CD8-positive, alpha-beta T cell (primary cell): ENCODE measurements at regions of chr12 and their contacts with region 1.

Region 1: GRCh38 chr12:22283006-22283506 is 51.5 kb downstream of the ST8SIA1 start:
- DNase-seq: no peak
- ATAC-seq: no peak
- H3K4me3 ChIP-seq: no peak overlapping the region
- H3K4me3 Mint-ChIP-seq: no peak overlapping the region
- H3K27ac ChIP-seq: no peak overlapping the region
- H3K27ac Mint-ChIP-seq: no peak overlapping the region
- H3K4me1 ChIP-seq: peaks cover 3% of the 10 kb centered on the region
- H3K4me1 Mint-ChIP-seq: peaks cover 6% of the 10 kb centered on the region
- H3K27me3 ChIP-seq: no peaks in the 10 kb centered on the region
- H3K27me3 Mint-ChIP-seq: peaks cover 5% of the 10 kb centered on the region
- CTCF ChIP-seq: no peak

Region 2: GRCh38 chr12:20314328-20314727 is 1968.7 kb before region 1 on chr12:
- CTCF ChIA-PET with region 1: no interaction called
- POLR2A ChIA-PET with region 1: no interaction called
- intact Hi-C with region 1: no loop called
- DNase-seq: no peak
- ATAC-seq: no peak
- H3K4me3 ChIP-seq: no peak overlapping the region
- H3K4me3 Mint-ChIP-seq: no peak overlapping the region
- H3K27ac ChIP-seq: no peak overlapping the region
- H3K27ac Mint-ChIP-seq: no peak overlapping the region
- H3K4me1 ChIP-seq: no peaks in the 10 kb centered on the region
- H3K4me1 Mint-ChIP-seq: no peaks in the 10 kb centered on the region
- H3K27me3 ChIP-seq: no peaks in the 10 kb centered on the region
- H3K27me3 Mint-ChIP-seq: no peaks in the 10 kb centered on the region
- CTCF ChIP-seq: no peak

Region 3: DNA sequence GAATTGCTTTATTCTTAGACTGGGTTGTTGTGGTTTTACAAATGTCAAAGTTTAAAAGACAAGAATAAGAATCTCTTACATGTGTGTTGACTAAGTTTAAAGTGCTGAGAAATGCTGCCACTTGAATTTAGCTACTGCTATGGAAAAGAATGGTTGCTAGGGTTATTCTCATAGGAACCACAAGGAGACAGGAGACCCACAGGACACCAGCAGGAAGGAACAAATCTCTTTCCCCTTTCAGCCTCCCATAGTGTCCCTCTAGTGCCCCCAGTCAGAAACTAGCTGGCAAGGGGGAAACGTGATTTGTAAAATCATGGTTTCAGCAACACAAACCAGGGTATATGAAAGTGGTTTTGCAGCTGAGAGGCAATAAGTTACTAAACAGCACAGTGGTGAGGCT is 51.2 kb before region 1 on chr12:
- CTCF ChIA-PET with region 1: no interaction called
- POLR2A ChIA-PET with region 1: no interaction called
- intact Hi-C with region 1: loop called in 1 of 2 experiments (anchors 5 kb)
- DNase-seq: no peak
- ATAC-seq: no peak
- H3K4me3 ChIP-seq: no peak overlapping the region
- H3K4me3 Mint-ChIP-seq: no peak overlapping the region
- H3K27ac ChIP-seq: no peak overlapping the region
- H3K27ac Mint-ChIP-seq: no peak overlapping the region
- H3K4me1 ChIP-seq: no peaks in the 10 kb centered on the region
- H3K4me1 Mint-ChIP-seq: no peaks in the 10 kb centered on the region
- H3K27me3 ChIP-seq: no peaks in the 10 kb centered on the region
- H3K27me3 Mint-ChIP-seq: peaks cover 3% of the 10 kb centered on the region
- CTCF ChIP-seq: no peak